ENCODE measurements at regions of chr11 and their contacts with region 1.

Region 1: DNA sequence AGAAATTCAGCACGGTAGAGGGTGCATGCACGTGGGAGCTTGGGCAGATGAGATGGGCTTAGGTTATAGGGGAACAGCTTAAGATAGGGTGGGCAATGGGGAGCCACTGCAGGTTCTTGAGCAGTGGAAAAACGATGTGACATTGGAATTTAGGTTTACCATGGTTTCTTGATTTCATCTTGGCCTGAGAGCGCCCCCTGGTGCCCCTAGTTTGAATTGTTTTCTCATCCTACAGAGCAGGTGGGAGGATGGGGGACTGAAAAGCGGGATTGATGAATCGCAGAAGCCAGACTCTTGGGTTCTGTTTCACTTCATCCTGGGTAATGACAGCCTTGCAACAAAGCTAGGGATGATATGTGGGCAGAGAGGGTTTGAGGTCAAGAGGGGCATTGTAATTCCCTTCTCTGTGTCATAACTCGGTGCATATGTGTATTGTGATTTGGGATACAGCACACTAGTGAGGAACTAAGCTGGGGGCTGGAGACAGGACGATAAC is 6.7 kb upstream of the MCAM start:
- DNase-seq: no peak
- H3K4me3 ChIP-seq: no peak overlapping the region
- CTCF ChIP-seq: peak; percentile 65

Region 2: DNA sequence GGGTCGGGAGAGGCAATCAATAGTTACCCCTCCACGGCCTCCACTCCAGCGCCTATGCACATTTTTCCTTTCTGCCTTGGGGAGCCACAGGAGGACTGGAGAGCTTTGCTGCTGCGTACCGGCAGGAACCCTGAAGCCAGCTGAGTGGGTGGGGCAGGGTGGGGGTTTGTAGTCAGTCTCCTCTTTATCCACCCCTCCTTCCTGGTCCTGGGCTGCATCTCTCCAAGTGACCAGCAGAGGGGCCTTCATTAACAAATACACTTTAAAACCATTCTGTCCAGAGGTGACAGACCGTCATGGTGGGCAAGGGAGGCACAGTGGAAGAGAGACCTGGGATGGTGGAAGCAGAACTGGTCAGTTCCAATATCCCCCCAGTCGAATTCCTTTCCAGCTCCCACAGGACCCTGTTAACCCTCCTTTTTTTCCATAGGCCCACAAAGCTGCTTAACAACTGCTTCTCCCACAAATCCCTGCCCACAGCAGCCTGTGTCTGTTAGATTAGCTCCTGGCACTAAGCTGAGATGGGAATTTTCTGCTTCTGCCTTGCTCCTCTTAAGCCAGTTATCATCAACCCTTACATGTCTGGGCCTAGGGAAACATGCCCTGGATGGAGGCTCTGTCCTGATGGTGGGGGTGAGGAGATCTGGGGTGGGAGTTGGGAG is 178.6 kb before region 1 on chr11:
- CTCF ChIA-PET with region 1: interaction called, 26 read pairs
- POLR2A ChIA-PET with region 1: no interaction called
- DNase-seq: no peak
- H3K4me3 ChIP-seq: no peak overlapping the region
- CTCF ChIP-seq: peak; percentile 66

Region 3: GRCh38 chr11:119300198-119300964 is 23.2 kb before region 1 on chr11:
- CTCF ChIA-PET with region 1: interaction called, 150 read pairs
- POLR2A ChIA-PET with region 1: no interaction called
- DNase-seq: no peak
- H3K4me3 ChIP-seq: no peak overlapping the region
- CTCF ChIP-seq: no peak

Region 4: DNA sequence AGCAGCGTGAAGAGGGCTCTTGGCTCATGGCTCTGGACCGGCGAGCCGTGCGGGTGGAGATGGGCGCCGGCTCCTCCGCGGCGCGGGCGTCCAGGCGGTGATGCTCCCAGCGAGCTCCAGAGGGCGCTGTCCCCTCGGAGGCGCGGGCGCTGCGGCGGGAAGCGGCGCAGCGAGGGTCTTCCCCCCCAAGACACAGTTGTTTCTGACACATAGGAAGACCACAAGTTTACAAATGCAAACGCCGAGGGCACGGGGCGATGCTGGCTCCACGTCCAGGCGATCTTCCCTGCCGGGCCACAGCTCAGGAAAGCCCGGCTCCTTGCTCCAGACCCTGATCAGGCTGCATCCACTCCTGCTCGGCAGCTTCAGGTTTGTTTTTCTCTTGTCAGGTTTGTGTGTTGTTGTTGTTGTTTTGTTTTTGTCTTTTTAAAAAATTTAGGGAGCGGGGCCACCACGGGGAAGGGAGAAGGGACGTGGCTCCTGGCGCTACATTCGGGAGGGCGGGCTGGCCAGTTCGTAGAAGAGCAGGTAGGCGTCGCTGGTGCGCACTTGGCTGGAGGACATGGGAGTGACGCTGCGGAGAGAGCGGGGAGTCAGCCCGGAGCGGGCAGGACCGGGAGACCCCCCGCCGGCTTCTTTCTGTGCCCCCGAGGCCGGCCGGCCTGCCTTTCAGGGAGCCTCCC is 32.9 kb after region 1 on chr11:
- CTCF ChIA-PET with region 1: interaction called, 31 read pairs
- POLR2A ChIA-PET with region 1: no interaction called
- DNase-seq: no peak
- H3K4me3 ChIP-seq: peak overlapping the region; percentile 69
- CTCF ChIP-seq: peak; percentile 98

Region 5: GRCh38 chr11:119381181-119381988 is 57.8 kb after region 1 on chr11 and contains the start of gene USP2:
- CTCF ChIA-PET with region 1: interaction called, 14 read pairs
- POLR2A ChIA-PET with region 1: no interaction called
- DNase-seq: peak; percentile 63
- H3K4me3 ChIP-seq: peak within 1 kb of the TSS; percentile 64
- CTCF ChIP-seq: peak; percentile 96